ENCODE measurements at regions of chr7 and their contacts with region 1.

Region 1: GRCh38 chr7:129054438-129055293 is at the start of gene TNPO3:
- DNase-seq: peak; percentile 86 to 89 (median 89)
- H3K4me3 ChIP-seq: peak within 1 kb of the TSS; percentile 60 to 98 (median 88)
- H3K4me3 Mint-ChIP-seq: peak within 1 kb of the TSS; percentile 98 to 100
- H3K27ac ChIP-seq: peak within 1 kb of the TSS; percentile 88 to 99
- H3K27ac Mint-ChIP-seq: peak within 1 kb of the TSS; percentile 100
- H3K4me1 ChIP-seq: peaks cover 14 to 25% of the 10 kb centered on the region in 2 donors
- H3K4me1 Mint-ChIP-seq: peaks cover 40% of the 10 kb centered on the region
- H3K27me3 ChIP-seq: no peaks in the 10 kb centered on the region
- H3K27me3 Mint-ChIP-seq: peaks cover 1 to 5% (median 3%) of the 10 kb centered on the region in 3 donors
- CTCF ChIP-seq: no peak
- polyA plus RNA-seq, gene TNPO3: 17.0 to 23.8 (median 19.7) TPM

Region 2: DNA sequence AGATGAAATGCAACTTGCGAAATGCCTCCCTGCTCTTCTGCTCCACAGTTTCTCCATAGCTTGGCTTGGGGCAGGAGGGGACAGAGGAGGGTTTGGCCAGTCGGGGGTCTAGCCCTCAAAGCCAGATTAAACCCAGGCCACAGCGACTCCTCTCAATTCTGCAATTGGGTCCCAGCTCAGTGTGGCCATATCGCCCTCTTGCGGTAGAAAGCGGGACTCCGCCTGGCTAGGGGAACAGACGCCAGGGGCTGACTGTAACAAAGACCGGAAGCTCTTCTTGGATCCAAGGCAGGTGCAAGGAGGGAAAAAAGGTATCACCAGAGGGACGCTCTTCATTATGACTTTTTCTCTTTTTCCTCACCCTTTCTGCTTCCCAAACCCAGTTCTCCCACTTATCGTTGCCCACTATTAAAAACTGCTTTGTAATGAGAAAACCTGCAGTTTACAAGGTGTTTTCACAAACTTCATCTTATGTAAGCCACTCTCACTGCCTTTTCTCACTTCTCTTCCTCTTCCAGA is 36.9 kb after region 1 on chr7:
- intact Hi-C with region 1: loop called in 1 of 2 experiments (anchors 5 kb)
- DNase-seq: peak; percentile 68 to 75 (median 75)
- H3K4me3 ChIP-seq: peak overlapping the region in 1 of 3 experiments; percentile 49
- H3K4me3 Mint-ChIP-seq: peak overlapping the region; percentile 56 to 76
- H3K27ac ChIP-seq: no peak overlapping the region
- H3K27ac Mint-ChIP-seq: peak overlapping the region in 6 of 7 donors; percentile 32 to 90 (median 68)
- H3K4me1 ChIP-seq: peaks cover 18 to 26% of the 10 kb centered on the region in 2 donors
- H3K4me1 Mint-ChIP-seq: peaks cover 35% of the 10 kb centered on the region
- H3K27me3 ChIP-seq: no peaks in the 10 kb centered on the region
- H3K27me3 Mint-ChIP-seq: peaks cover 0 to 1% (median 0%) of the 10 kb centered on the region in 3 donors
- CTCF ChIP-seq: peak; percentile 92